Body of pancreas (tissue), 4 donors: ENCODE measurements at regions of chr11 and their contacts with region 1.

Region 1: DNA sequence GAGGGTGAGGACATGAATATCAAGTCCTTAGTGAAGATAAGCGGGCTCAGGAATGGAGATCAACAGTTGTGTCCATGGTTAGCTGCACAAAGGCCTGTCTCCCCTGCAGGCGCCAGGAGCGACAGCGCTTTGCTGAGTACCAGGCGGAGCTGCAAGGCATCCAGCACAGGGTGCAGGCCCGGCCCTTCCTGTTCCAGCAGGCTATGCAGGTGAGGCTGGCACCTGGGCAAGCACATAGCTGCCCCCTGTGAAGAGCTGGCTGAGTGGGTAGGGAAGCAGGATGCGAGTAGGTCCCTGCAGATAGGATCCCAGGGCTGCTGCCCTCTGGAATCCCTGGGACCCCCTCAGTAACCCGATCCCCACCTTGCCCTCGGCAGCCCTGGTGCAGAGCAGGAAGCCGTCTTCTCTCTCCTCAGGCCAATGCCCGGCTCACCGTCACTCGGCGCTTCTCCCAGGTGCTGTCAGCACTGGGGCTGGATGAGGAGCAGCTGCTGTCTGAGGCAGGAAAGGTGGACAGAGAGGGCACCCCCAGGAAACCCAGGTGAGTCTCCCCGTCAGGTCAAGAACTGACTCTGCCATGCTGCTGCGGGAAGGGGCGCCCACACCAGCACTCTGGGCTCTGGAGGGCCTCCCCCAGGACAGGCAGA is 2.6 kb upstream of the SART1 start:
- DNase-seq: no peak
- ATAC-seq: no peak
- H3K4me3 ChIP-seq: no peak overlapping the region
- H3K27ac ChIP-seq: no peak overlapping the region
- H3K4me1 ChIP-seq: peaks cover 24% of the 10 kb centered on the region
- H3K27me3 ChIP-seq: no peaks in the 10 kb centered on the region
- CTCF ChIP-seq: no peak
- POLR2A ChIP-seq: no peak

Region 2: GRCh38 chr11:65919146-65920033 is 39.5 kb before region 1 on chr11 and contains the start of gene DRAP1:
- intact Hi-C with region 1: loop called (anchors 5 kb)
- DNase-seq: peak; percentile 99 to 100 (median 99)
- ATAC-seq: peak; percentile 92
- H3K4me3 ChIP-seq: peak within 1 kb of the TSS; percentile 95 to 99
- H3K27ac ChIP-seq: peak within 1 kb of the TSS; percentile 81 to 88 (median 85)
- H3K4me1 ChIP-seq: peaks cover 49% of the 10 kb centered on the region
- H3K27me3 ChIP-seq: no peaks in the 10 kb centered on the region
- CTCF ChIP-seq: peak in 1 of 7 experiments; percentile 40
- POLR2A ChIP-seq: peak; percentile 46 to 65 (median 53)
- total RNA-seq, gene DRAP1: 29.6 to 91.6 TPM